Mammary epithelial cell (primary cell): ENCODE measurements at regions of chr10 and their contacts with region 1.

Region 1: GRCh38 chr10:13099666-13100348 is at the start of gene OPTN:
- DNase-seq: peak; percentile 82
- H3K4me3 ChIP-seq: peak within 1 kb of the TSS; percentile 69 to 95 (median 82)
- H3K27ac ChIP-seq: peak within 1 kb of the TSS; percentile 74
- H3K4me1 ChIP-seq: peaks cover 6% of the 10 kb centered on the region
- H3K27me3 ChIP-seq: no peaks in the 10 kb centered on the region
- CTCF ChIP-seq: peak; percentile 76 to 89
- total RNA-seq, gene OPTN: 60.0 to 142 TPM

Region 2: GRCh38 chr10:12264204-12264940 is 835.4 kb before region 1 on chr10:
- CTCF ChIA-PET with region 1: no interaction called
- dilution Hi-C with region 1: no loop called
- in situ Hi-C with region 1: loop called in 1 of 2 experiments (anchors 25 kb)
- intact Hi-C with region 1: loop called (anchors 2 kb)
- DNase-seq: peak; percentile 67
- H3K4me3 ChIP-seq: peak overlapping the region; percentile 15 to 39 (median 19)
- H3K27ac ChIP-seq: no peak overlapping the region
- H3K4me1 ChIP-seq: peaks cover 3% of the 10 kb centered on the region
- H3K27me3 ChIP-seq: no peaks in the 10 kb centered on the region
- CTCF ChIP-seq: peak; percentile 67 to 89

Region 3: DNA sequence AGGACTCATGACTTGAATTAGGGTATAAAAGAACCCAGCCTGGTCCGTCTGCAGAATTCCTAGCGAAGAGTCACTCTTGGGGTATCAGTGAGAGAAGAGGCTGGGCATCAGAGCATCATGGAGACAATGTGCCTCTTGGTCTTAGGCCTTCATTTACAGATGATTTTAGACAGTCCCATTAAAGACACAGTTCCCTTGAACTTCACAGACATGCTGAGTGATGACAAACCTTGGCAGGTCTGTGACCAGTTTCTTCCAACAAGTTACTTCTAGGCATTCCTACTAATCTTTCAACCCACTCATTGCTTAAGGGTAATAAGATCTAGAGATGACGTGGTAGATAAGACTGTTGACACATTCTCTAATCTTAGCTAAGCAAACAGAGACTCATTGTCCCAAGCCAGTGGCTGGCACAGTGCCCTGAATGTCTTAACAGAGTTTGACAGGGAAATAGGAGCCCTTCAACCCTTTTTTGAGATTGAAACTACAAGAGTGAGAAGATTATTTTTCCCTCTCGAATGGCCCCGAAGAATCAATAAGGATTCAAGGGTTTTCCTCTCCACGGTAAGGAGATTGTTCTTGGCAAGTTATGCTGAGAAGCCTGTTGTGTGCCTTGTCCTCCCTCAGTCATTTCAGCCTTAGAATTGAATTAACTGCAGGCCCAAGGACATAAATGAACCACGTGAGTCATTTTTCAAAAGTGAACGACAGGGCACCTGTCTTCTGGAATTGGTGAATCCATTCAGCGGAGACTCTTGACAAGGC is 379.4 kb before region 1 on chr10:
- CTCF ChIA-PET with region 1: interaction called, 4 read pairs
- dilution Hi-C with region 1: no loop called
- in situ Hi-C with region 1: no loop called
- intact Hi-C with region 1: loop called (anchors 1 kb)
- DNase-seq: peak; percentile 97
- H3K4me3 ChIP-seq: no peak overlapping the region
- H3K27ac ChIP-seq: peak overlapping the region; percentile 36
- H3K4me1 ChIP-seq: peaks cover 40% of the 10 kb centered on the region
- H3K27me3 ChIP-seq: no peaks in the 10 kb centered on the region
- CTCF ChIP-seq: no peak

Region 4: DNA sequence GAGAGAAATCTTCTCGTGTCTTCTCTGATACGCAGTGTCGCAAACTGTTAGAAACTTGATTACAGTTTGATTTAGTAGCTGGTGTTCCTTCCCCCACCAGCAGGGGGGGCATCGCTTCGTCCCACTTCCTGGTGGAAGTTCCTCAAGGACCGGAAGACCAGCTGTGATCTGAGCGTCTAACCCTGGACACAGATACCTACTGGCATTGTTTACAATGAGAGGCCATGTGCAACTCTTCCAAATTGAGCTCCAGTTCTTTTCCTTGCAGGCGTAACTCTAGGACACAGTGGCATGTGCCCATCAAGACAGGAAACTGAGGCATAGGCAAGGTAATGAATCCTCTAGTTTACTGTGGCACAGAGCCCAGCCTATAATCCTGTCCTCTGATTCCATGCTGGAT is 317.3 kb before region 1 on chr10:
- CTCF ChIA-PET with region 1: no interaction called
- dilution Hi-C with region 1: no loop called
- in situ Hi-C with region 1: no loop called
- intact Hi-C with region 1: loop called (anchors 1 kb)
- DNase-seq: peak; percentile 6
- H3K4me3 ChIP-seq: no peak overlapping the region
- H3K27ac ChIP-seq: no peak overlapping the region
- H3K4me1 ChIP-seq: no peaks in the 10 kb centered on the region
- H3K27me3 ChIP-seq: no peaks in the 10 kb centered on the region
- CTCF ChIP-seq: peak; percentile 53 to 67

Region 5: DNA sequence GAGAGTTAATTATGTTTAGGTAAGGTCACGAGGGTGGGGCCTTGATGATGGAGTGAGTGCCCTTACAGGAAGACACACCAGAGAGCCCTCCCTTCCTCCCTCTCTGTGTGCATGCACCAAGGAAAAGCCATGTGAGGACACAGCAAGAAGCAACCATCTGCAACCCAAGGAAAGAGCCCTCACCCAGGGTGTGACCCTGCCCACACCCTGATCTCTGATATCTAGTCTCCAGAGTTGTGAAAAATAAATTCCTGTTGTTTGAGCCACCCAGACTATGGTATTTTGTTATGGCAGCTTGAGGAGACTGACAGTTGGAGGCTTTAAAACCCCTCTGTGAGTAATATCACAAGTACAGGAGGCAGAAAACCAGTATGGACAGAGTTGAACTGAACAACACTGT is 46.6 kb after region 1 on chr10:
- CTCF ChIA-PET with region 1: no interaction called
- dilution Hi-C with region 1: no loop called
- in situ Hi-C with region 1: no loop called
- intact Hi-C with region 1: no loop called
- DNase-seq: peak; percentile 2
- H3K4me3 ChIP-seq: no peak overlapping the region
- H3K27ac ChIP-seq: no peak overlapping the region
- H3K4me1 ChIP-seq: no peaks in the 10 kb centered on the region
- H3K27me3 ChIP-seq: no peaks in the 10 kb centered on the region
- CTCF ChIP-seq: no peak